ENCODE measurements at regions of chr19 and their contacts with region 1.

Region 1: DNA sequence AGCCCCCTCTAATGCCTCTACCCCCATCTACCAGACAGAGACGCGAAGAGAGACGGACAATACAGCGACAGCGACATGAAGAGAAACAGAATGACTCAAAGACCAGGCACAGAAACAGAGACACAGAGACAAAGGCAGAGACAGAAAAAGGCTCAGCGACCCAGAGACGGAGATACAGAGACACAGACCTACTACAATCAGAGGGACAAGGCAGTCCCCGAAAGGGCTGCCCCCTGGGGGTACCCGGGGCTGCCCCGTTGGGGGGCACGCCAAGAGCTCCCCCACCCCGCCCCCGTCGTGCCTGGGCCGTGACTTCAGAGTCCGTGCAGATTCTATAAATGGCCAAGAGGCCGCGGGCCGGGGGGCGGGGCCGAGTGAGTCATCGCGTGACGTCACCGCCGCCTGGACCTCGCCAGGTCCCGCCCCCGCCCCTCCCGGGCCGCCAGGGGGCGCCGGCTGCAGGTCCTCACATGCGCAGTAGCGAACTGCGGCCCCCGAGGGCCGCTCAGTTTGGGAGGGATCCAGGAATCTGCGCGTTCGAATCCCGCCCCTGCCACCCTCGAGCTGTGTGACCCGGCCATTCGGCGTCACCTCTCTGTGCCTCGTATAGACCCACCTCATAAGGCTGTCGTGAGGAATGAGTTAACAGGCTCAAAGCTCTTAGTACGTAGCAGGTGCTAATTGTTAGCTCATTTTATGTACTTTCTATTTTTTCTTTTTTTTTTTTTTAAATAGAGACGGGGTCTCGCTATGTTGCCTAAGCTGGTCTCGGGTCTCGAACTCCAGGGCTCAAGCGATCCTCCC is 2.7 kb upstream of the CNN1 start:
- DNase-seq: peak; percentile 91
- H3K4me3 Mint-ChIP-seq: peak overlapping the region; percentile 36
- H3K27ac Mint-ChIP-seq: peak overlapping the region; percentile 4
- H3K4me1 Mint-ChIP-seq: peaks cover 11% of the 10 kb centered on the region
- H3K27me3 Mint-ChIP-seq: peaks cover 12% of the 10 kb centered on the region

Region 2: DNA sequence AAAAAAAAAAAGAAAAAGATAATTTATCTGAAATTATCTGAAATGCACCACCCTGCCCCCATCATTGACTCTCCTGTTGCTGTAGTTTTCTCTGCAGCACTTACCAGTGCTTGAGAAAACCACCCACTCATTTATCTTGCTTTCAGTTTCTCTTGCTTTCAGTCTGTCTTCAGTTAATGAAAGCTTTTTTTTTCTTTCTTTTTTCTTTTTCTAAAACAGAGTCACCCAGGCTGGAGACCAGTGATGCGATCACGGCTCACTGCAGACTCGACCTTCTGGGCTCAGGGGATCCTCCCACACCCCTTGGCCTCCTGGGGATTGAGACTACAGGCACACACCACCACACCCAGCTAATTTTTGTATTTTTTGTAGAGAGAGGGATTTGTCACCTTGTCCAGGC is 45.7 kb after region 1 on chr19:
- CTCF ChIA-PET with region 1: interaction called, 17 read pairs
- POLR2A ChIA-PET with region 1: interaction called, 3 read pairs
- intact Hi-C with region 1: loop called (anchors 2 kb)
- DNase-seq: peak; percentile 78
- H3K4me3 Mint-ChIP-seq: peak overlapping the region; percentile 47
- H3K27ac Mint-ChIP-seq: peak overlapping the region; percentile 93
- H3K4me1 Mint-ChIP-seq: peaks cover 25% of the 10 kb centered on the region
- H3K27me3 Mint-ChIP-seq: no peaks in the 10 kb centered on the region

Region 3: DNA sequence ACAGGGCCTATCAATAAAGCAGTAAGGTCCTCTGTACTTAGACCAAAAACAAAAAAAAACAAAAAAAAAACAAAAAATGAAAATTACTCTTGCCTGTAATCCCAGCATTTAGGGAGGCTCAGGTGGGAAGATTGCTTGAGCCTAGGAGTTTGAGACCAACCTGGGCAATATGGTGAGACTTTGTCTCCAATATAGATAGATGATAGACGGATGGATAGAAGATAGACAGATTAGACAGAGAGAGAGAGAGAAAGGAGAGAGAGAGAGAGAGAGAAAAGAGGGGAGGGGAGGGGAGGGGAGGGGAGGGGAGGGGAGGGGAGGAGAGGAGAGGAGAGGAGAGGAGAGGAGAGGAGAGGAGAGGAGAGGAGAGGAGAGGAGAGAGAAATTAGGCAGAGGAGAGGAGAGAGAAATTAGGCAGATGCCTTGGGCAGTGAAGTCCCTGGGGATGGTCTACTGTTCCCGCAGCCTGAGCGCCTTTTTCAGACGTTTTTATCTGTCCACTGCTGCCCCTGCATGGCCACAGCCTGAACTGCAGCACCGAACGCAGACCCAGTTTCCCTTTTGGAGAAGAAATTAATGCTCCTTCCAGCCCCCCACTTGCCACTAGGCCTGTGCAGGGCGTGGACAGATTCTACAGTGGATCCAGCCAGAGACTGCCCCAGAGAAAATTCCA is 51.4 kb after region 1 on chr19:
- CTCF ChIA-PET with region 1: interaction called, 17 read pairs
- POLR2A ChIA-PET with region 1: interaction called, 3 read pairs
- intact Hi-C with region 1: loop called (anchors 2 kb)
- DNase-seq: peak; percentile 88
- H3K4me3 Mint-ChIP-seq: no peak overlapping the region
- H3K27ac Mint-ChIP-seq: no peak overlapping the region
- H3K4me1 Mint-ChIP-seq: peaks cover 3% of the 10 kb centered on the region
- H3K27me3 Mint-ChIP-seq: no peaks in the 10 kb centered on the region

Measured in activated CD4-positive, alpha-beta memory T cell treated with anti-CD3 and anti-CD28 coated beads for 36 hours (primary cell).